Astrocyte of the cerebellum (primary cell): ENCODE measurements at regions of chr13 and their contacts with region 1.

Region 1: DNA sequence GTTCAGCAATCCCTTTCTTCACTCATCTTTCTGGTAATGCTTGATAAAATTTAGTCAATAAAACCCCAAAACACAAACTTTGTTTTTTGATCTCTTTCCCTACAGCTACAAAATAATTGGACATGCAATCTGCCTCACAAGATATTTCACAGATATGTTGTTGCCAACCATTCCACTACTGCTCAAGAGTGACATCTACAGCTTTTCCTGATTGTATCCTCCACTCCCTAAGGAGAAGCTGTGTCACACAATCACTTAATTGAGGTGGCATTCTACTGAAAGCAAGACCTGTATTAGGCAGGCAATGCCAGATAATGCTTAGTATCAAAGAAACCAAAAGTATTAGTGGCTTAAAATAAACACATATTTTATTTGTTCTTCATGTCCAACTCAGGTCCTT is 1646.2 kb upstream of the SPRY2 start:
- DNase-seq: no peak
- H3K4me3 ChIP-seq: no peak overlapping the region
- CTCF ChIP-seq: no peak

Region 2: DNA sequence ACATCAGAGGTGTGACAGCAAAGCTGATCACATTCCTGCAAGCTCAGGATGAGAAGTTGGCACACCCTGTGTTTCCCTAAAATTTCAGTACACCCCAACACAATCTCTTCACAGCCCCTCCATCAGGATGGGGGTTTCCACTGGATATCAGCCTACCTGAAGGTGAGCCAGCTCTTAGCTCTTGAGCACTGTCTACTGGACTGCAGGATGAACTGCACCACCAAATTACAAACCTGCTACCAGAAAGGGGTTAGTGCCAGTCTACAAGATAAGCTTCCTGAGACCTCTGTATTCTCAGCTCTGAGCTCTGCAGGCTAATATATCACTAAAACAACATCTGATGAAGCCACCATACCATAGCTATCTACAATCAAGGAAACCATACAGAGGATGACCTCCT is 30.0 kb before region 1 on chr13:
- in situ Hi-C with region 1: loop called (anchors 5 kb)
- DNase-seq: no peak
- H3K4me3 ChIP-seq: no peak overlapping the region
- CTCF ChIP-seq: no peak

Region 3: GRCh38 chr13:82036602-82037001 is 49.4 kb after region 1 on chr13:
- in situ Hi-C with region 1: loop called (anchors 10 kb)
- DNase-seq: no peak
- H3K4me3 ChIP-seq: no peak overlapping the region
- CTCF ChIP-seq: no peak